PC-9 (cell line): ENCODE measurements at regions of chr1 and their contacts with region 1.

Region 1: DNA sequence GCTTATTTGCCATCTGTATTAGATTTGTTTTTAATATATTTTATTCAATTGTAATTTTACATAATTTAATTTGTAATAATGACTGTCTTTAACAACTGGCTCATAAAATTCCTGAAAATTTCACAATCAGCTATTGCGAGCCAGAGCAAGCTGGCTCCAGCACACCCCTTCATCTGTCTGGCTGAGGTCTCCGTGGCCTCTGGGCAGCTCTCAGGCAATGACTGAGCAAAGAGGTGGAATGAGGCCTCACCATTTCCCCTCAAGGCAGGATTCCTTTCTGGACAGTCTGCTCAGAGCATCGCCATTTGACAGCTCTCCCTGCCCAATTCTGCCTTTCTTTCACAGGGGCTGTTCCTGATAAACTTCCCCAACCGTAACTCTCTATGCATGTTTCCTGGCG is 5.8 kb upstream of the KANK4 start:
- DNase-seq: peak; percentile 77 to 79
- H3K4me3 ChIP-seq: no peak overlapping the region
- H3K27ac ChIP-seq: no peak overlapping the region
- H3K4me1 ChIP-seq: peaks cover 27% of the 10 kb centered on the region
- H3K27me3 ChIP-seq: no peaks in the 10 kb centered on the region
- CTCF ChIP-seq: no peak

Region 2: DNA sequence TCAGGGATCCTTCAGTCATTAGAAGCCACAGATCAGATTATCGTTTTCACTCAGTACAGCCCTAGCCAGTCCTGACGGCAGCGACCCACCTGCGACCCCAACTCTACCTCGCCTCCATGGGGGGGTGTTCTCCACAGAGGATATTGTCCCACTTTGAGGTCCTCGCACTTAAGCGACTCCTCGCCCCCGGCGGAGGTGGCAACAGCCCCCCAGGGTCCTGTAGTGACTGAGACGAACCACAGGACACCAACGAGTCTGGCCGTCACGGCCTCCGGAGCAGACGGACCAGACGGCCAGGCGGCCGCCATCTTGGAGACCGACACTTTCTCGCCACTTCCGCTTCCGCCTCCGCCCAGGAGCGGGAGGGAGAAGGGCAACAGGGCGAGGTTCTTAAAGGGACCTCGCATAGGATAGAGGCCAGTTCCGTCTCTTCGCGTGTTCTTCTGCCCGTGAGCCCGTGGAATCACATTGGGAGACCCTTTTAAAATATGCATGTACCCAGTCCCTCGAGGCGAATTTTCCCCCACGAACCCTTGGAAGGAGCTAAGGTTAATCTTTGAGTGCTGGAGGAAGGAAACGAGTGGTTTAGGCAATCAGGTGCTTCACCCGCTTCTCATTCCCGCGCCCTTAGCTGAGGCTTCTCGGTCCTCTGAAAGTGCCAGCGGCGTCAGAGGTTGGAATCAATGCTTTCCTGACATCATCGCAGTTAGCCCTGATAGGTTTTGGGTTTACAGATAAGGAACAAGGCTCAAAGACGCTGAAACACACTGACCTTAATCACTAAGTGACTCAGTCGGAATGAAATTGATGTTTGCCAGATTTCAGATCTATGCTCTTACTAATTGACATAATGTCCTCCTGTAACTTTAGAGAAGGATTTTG is 600.0 kb before region 1 on chr1 and contains the start of gene TM2D1:
- CTCF ChIA-PET with region 1: no interaction called
- POLR2A ChIA-PET with region 1: no interaction called
- intact Hi-C with region 1: no loop called
- DNase-seq: peak; percentile 87 to 90
- H3K4me3 ChIP-seq: peak within 1 kb of the TSS; percentile 95
- H3K27ac ChIP-seq: peak within 1 kb of the TSS; percentile 74
- H3K4me1 ChIP-seq: peaks cover 28% of the 10 kb centered on the region; the same call in 1 of the 2 replicates
- H3K27me3 ChIP-seq: no peaks in the 10 kb centered on the region
- CTCF ChIP-seq: no peak
- total RNA-seq, gene TM2D1: 36.8 and 42.0 TPM in 2 replicates

Region 3: GRCh38 chr1:62241377-62242131 is 83.5 kb before region 1 on chr1:
- CTCF ChIA-PET with region 1: no interaction called
- POLR2A ChIA-PET with region 1: interaction called, 10 read pairs
- intact Hi-C with region 1: no loop called
- DNase-seq: peak; percentile 56 to 57
- H3K4me3 ChIP-seq: no peak overlapping the region
- H3K27ac ChIP-seq: no peak overlapping the region
- H3K4me1 ChIP-seq: peaks cover 31% of the 10 kb centered on the region
- H3K27me3 ChIP-seq: no peaks in the 10 kb centered on the region
- CTCF ChIP-seq: no peak

Region 4: DNA sequence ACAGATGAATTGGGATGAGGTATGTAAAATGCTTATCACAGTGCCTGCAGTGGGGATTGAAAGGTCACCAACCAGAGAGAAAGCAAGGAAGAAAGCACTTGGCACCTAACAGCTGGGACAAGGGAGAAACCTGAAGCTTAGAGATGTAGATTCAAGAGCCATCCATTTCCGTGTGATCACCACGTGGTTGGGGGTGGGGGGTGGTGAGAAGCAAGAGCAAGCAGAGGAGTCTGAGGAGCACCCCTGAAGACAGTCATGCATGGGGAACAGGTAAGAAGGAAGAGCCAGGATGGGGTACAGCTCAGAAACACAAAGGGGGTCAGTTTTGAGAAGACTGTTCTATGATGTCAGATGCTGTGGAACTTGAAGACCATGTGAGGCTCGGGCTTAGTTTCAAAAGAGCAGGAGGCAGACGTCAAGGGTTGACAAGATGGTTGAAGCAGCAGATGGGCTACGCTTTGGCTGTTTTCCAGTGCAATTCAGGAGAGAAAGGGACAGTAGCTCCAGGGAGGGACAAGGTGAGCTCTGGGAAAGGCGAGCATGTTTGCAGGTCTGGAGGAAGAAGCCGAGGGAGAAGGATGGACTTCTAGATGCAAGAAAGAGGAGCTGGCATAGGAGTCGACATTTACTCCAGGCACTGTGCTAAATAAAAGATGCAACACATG is 23.2 kb before region 1 on chr1:
- CTCF ChIA-PET with region 1: no interaction called
- POLR2A ChIA-PET with region 1: interaction called, 10 read pairs
- intact Hi-C with region 1: no loop called
- DNase-seq: no peak
- H3K4me3 ChIP-seq: no peak overlapping the region
- H3K27ac ChIP-seq: no peak overlapping the region
- H3K4me1 ChIP-seq: peaks cover 9% of the 10 kb centered on the region
- H3K27me3 ChIP-seq: no peaks in the 10 kb centered on the region
- CTCF ChIP-seq: no peak

Region 5: DNA sequence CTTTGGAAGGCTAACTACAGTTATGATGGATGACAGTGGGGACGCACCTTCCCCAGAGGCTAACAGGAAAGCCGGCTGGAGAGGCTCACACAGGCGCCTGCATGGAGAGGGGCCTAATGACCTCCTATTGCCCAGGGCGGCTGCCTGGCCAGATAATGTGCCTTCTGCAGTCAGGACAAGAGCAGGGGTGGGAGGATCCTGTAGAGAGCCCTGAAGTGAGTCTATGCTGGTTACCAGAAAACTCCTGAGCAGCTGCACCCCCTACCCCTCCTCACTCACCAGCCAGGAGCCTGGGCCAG is 16.9 kb before region 1 on chr1:
- CTCF ChIA-PET with region 1: interaction called, 7 read pairs
- POLR2A ChIA-PET with region 1: interaction called, 5 read pairs
- intact Hi-C with region 1: loop called (anchors 1 kb)
- DNase-seq: peak; percentile 89 to 95
- H3K4me3 ChIP-seq: no peak overlapping the region
- H3K27ac ChIP-seq: peak overlapping the region; percentile 73
- H3K4me1 ChIP-seq: peaks cover 62% of the 10 kb centered on the region
- H3K27me3 ChIP-seq: no peaks in the 10 kb centered on the region
- CTCF ChIP-seq: no peak

Region 6: DNA sequence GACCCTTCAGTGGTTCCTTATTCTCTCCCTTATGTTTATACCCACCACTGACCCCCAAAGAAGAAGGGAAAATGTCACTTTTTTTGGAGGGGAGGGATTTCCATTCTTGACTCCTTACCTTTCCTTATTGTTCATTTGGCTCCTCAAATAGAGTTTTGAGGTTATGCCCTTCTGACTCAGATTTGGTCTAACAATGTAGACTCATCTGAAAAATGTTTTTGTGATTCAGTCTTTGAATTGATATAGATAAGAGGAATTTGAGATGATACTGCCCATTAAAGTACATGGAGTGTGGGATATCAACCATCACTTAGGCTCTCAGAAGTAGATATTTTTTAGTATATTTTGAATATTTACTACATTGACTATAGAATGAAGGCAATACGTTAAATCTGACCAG is 127.9 kb after region 1 on chr1:
- CTCF ChIA-PET with region 1: no interaction called
- POLR2A ChIA-PET with region 1: no interaction called
- intact Hi-C with region 1: no loop called
- DNase-seq: no peak
- H3K4me3 ChIP-seq: no peak overlapping the region
- H3K27ac ChIP-seq: no peak overlapping the region
- H3K4me1 ChIP-seq: no peaks in the 10 kb centered on the region
- H3K27me3 ChIP-seq: no peaks in the 10 kb centered on the region
- CTCF ChIP-seq: no peak